ENCODE measurements at regions of chr10 and their contacts with region 1.

Region 1: DNA sequence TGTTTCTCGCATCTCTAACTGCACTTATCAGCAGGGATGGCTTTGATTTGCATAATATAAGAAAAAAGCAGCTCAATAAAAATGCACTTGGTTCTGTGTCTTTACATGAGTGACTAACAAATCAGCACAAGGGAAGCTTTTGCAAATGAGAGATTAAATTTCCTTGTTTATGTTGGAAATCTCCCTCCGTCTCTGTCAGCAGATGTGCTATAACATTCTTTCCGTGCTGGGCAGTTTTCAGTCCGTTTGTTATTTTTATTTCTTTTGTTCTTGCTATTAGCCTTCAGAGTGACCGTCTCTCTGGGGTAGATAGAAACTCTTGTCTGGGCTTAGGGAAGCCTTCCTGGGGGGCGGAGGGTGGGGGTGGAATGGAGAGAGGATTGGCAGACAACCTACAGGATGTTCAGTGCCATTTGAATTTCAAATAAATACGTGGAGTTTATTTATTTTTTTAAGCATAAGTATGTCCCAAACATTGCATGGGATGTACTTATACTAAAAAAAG is 96.0 kb downstream of the GATA3 start:
- DNase-seq: no peak
- CTCF ChIP-seq: no peak

Region 2: GRCh38 chr10:8138471-8138870 is 12.0 kb before region 1 on chr10:
- CTCF ChIA-PET with region 1: interaction called, 11 read pairs
- POLR2A ChIA-PET with region 1: no interaction called
- DNase-seq: no peak
- CTCF ChIP-seq: no peak

Region 3: GRCh38 chr10:8174772-8175171 is 24.3 kb after region 1 on chr10:
- CTCF ChIA-PET with region 1: no interaction called
- POLR2A ChIA-PET with region 1: no interaction called
- DNase-seq: no peak
- CTCF ChIP-seq: no peak